Heart right ventricle (tissue), 16 donors: ENCODE measurements at regions of chr2 and their contacts with region 1.

Region 1: DNA sequence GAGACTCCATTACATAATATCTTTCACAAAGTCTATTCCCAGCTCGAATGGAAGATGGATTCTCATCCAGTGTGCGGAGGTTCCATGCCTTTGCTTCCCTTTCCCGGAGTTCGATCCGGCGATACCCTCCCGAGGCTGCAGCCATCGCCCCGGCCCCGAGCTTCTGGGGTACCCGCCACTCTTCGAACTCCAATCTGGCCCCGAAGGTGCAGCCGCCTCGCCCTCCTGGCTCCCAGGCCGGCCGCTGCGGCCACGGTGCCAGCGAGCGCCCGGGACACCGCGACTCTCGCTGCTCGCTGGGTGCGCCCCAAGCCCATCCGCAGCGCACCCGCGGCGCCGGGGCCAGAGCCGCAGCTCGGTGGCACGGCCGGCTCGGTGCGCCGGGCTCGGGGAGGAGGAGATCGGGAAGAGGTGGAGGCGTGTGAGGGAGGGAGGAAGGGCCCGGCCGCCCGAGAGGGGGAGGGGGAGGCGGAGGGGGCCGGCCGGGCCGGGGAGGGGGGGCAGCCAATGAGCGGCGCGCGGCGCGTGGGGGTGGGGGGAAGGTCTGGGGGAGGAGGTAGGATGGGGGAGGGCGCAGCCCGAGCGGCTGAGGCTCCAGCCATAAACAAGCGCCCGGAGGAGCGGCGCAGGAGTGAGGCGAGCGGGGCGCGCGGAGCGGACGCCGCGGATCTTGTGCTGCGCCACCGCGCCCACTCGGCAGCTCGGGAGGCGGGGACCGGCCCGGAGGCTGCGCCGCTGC is at the start of gene CRIM1:
- DNase-seq: peak; percentile 90 to 93
- ATAC-seq: peak; percentile 69 to 93 (median 80)
- H3K4me3 ChIP-seq: peak within 1 kb of the TSS; percentile 56 to 95 (median 89)
- H3K27ac ChIP-seq: peak within 1 kb of the TSS; percentile 81 to 93 (median 91)
- H3K4me1 ChIP-seq: peaks cover 8 to 54% (median 44%) of the 10 kb centered on the region in 9 donors
- H3K27me3 ChIP-seq: peaks cover 0 to 34% (median 0%) of the 10 kb centered on the region in 7 donors
- CTCF ChIP-seq: no peak
- total RNA-seq, gene CRIM1: 35.1 to 83.6 (median 66.5) TPM

Region 2: GRCh38 chr2:35973132-35973736 is 382.1 kb before region 1 on chr2:
- intact Hi-C with region 1: loop called in 1 of 10 experiments (anchors 10 kb)
- DNase-seq: no peak
- ATAC-seq: peak in 6 of 8 donors; percentile 67 to 91 (median 79)
- H3K4me3 ChIP-seq: no peak overlapping the region
- H3K27ac ChIP-seq: peak overlapping the region; percentile 34 to 75 (median 60)
- H3K4me1 ChIP-seq: no peaks in the 10 kb centered on the region
- H3K27me3 ChIP-seq: no peaks in the 10 kb centered on the region
- CTCF ChIP-seq: peak in 8 of 9 donors; percentile 15 to 61 (median 46)

Region 3: GRCh38 chr2:36416370-36417165 is 61.2 kb after region 1 on chr2:
- intact Hi-C with region 1: loop called in 4 of 10 experiments (anchors 5 kb)
- DNase-seq: peak in 1 of 2 donors; percentile 22
- ATAC-seq: peak in 7 of 8 donors; percentile 28 to 74 (median 50)
- H3K4me3 ChIP-seq: no peak overlapping the region
- H3K27ac ChIP-seq: peak overlapping the region in 2 of 10 donors; percentile 13 to 76
- H3K4me1 ChIP-seq: peaks cover 10 to 100% (median 81%) of the 10 kb centered on the region in 9 donors
- H3K27me3 ChIP-seq: no peaks in the 10 kb centered on the region
- CTCF ChIP-seq: no peak

Region 4: GRCh38 chr2:36441816-36442215 is 86.5 kb after region 1 on chr2:
- intact Hi-C with region 1: no loop called
- DNase-seq: no peak
- ATAC-seq: no peak
- H3K4me3 ChIP-seq: no peak overlapping the region
- H3K27ac ChIP-seq: no peak overlapping the region
- H3K4me1 ChIP-seq: peaks cover 0 to 47% (median 23%) of the 10 kb centered on the region in 9 donors
- H3K27me3 ChIP-seq: no peaks in the 10 kb centered on the region
- CTCF ChIP-seq: no peak

Region 5: DNA sequence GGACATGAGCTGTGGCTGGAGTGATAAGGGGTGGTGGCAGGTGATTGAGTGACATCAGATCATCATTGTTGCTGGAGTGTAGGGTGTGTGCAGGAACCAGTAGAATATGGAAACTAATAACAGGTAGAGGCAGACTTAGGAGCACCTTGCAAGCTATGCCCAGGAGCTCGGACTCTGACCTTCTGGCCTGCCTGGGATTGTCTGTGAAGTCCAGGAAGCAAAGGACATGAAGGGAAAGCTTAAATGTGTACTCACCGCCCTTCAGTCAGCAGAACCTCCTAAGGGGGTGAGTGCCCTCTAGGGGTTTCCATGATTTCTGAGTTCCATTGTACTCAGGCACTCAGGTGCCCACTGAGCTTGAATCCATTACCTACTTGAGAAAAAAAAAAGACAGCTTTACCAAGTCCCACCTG is 104.4 kb after region 1 on chr2:
- intact Hi-C with region 1: loop called (anchors 1 to 10 kb)
- DNase-seq: peak in 1 of 2 donors; percentile 40
- ATAC-seq: peak in 6 of 8 donors; percentile 39 to 70 (median 44)
- H3K4me3 ChIP-seq: no peak overlapping the region
- H3K27ac ChIP-seq: no peak overlapping the region
- H3K4me1 ChIP-seq: peaks cover 0 to 77% (median 61%) of the 10 kb centered on the region in 9 donors
- H3K27me3 ChIP-seq: no peaks in the 10 kb centered on the region
- CTCF ChIP-seq: peak in 8 of 9 donors; percentile 25 to 68 (median 52)

Region 6: GRCh38 chr2:36597532-36598377 is 242.4 kb after region 1 on chr2 and contains the start of gene FEZ2:
- intact Hi-C with region 1: loop called in 1 of 10 experiments (anchors 2 kb)
- DNase-seq: peak; percentile 78 to 81
- ATAC-seq: peak; percentile 96 to 99 (median 98)
- H3K4me3 ChIP-seq: peak within 1 kb of the TSS; percentile 71 to 100 (median 99)
- H3K27ac ChIP-seq: peak within 1 kb of the TSS; percentile 71 to 99 (median 99)
- H3K4me1 ChIP-seq: peaks cover 0 to 34% (median 24%) of the 10 kb centered on the region in 9 donors
- H3K27me3 ChIP-seq: no peaks in the 10 kb centered on the region
- CTCF ChIP-seq: peak in 1 of 9 donors; percentile 15
- total RNA-seq, gene FEZ2: 29.8 to 51.7 (median 40.9) TPM

Region 7: GRCh38 chr2:36770542-36771287 is 415.4 kb after region 1 on chr2:
- intact Hi-C with region 1: loop called in 1 of 10 experiments (anchors 10 kb)
- DNase-seq: peak in 1 of 2 donors; percentile 20
- ATAC-seq: peak in 3 of 8 donors; percentile 37 to 46 (median 37)
- H3K4me3 ChIP-seq: no peak overlapping the region
- H3K27ac ChIP-seq: no peak overlapping the region
- H3K4me1 ChIP-seq: no peaks in the 10 kb centered on the region
- H3K27me3 ChIP-seq: no peaks in the 10 kb centered on the region
- CTCF ChIP-seq: peak in 7 of 9 donors; percentile 32 to 66 (median 41)